ENCODE measurements at regions of chr15 and their contacts with region 1.

Region 1: GRCh38 chr15:98914626-98915025 is 93.0 kb downstream of the PGPEP1L start:
- DNase-seq: no peak
- ATAC-seq: peak; percentile 62
- H3K4me3 ChIP-seq: no peak overlapping the region
- H3K27ac ChIP-seq: peak overlapping the region in 1 of 2 donors; percentile 91
- H3K4me1 ChIP-seq: peaks cover 4 to 5% of the 10 kb centered on the region in 2 donors
- H3K27me3 ChIP-seq: no peaks in the 10 kb centered on the region

Region 2: DNA sequence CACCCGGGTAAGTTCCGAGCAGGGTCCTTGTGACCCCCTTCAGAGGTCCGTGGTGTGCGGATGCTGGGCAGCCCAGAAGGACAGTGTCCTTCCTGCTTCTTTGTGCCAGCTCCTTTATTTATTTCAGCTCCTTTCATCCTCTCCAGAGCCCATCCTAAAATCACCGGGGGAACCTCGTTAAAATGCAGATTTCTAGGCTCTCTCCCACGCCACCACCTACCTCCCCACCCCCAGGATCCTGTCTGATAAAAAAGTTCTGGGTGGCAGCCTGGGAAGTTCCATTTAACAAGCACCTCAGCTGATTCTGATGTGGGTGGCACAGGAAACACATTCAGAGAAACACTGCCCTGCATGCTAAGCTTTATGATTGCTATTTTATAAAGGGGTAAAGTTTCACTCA is 278.8 kb before region 1 on chr15:
- intact Hi-C with region 1: no loop called
- DNase-seq: no peak
- ATAC-seq: no peak
- H3K4me3 ChIP-seq: no peak overlapping the region
- H3K27ac ChIP-seq: no peak overlapping the region
- H3K4me1 ChIP-seq: no peaks in the 10 kb centered on the region
- H3K27me3 ChIP-seq: no peaks in the 10 kb centered on the region

Region 3: DNA sequence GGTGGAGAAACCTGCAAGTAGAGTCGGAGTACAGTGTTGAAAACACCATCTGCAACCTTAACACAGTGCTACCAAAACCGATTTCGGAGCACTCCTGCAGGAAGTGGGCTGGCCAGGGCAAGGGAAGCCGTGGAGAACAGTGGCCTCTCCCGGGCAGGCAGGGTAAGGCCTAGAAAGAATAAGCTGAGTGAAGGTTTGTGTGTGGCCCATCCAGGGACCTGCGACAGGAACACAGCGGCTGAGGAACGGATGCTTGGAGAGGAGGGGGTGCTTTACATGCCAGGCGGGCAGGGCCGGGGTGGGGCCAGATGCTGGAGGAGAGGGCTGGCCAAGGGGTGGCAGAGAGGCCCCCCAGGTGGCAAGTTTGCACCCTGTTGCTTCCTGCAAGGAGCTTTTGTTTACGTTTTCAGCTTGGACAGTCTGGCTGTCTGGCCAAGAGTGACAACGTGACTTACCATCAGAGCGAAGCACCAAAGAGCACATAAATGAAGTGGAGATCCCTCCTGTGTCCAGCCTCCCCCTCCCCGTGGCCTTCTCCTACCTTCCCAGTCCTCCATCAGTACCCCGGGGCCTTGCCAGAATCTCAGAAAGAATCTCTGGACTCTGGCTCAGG is 63.6 kb before region 1 on chr15:
- intact Hi-C with region 1: no loop called
- DNase-seq: peak; percentile 83 to 87
- ATAC-seq: peak; percentile 75
- H3K4me3 ChIP-seq: no peak overlapping the region
- H3K27ac ChIP-seq: peak overlapping the region; percentile 43 to 69
- H3K4me1 ChIP-seq: no peaks in the 10 kb centered on the region
- H3K27me3 ChIP-seq: no peaks in the 10 kb centered on the region

Region 4: DNA sequence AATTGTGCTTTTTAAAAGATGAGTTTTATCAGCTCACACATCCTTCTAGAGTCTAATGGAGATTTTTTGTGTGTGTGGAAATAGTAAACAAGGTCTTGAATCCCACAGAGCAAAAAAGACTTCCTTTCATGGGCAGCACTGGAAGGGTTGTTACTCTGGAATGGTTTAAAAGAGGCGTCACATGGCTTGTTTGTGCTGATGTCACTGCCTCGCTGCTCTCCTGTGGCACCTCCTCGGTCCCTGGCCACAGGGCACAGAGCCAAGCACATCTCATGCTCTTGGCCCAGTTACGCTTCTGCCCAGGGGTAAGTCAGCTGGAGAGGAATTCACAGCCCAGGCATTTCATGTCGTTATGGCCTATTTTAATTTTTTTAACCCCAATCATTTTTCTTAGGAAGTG is 39.8 kb after region 1 on chr15:
- intact Hi-C with region 1: loop called (anchors 5 kb)
- DNase-seq: peak; percentile 92 to 96
- ATAC-seq: peak; percentile 77
- H3K4me3 ChIP-seq: no peak overlapping the region
- H3K27ac ChIP-seq: peak overlapping the region in 1 of 2 donors; percentile 92
- H3K4me1 ChIP-seq: peaks cover 0 to 2% of the 10 kb centered on the region in 2 donors
- H3K27me3 ChIP-seq: no peaks in the 10 kb centered on the region

Measured in aorta (tissue), 5 donors.